ENCODE measurements at regions of chr6 and their contacts with region 1.

Region 1: DNA sequence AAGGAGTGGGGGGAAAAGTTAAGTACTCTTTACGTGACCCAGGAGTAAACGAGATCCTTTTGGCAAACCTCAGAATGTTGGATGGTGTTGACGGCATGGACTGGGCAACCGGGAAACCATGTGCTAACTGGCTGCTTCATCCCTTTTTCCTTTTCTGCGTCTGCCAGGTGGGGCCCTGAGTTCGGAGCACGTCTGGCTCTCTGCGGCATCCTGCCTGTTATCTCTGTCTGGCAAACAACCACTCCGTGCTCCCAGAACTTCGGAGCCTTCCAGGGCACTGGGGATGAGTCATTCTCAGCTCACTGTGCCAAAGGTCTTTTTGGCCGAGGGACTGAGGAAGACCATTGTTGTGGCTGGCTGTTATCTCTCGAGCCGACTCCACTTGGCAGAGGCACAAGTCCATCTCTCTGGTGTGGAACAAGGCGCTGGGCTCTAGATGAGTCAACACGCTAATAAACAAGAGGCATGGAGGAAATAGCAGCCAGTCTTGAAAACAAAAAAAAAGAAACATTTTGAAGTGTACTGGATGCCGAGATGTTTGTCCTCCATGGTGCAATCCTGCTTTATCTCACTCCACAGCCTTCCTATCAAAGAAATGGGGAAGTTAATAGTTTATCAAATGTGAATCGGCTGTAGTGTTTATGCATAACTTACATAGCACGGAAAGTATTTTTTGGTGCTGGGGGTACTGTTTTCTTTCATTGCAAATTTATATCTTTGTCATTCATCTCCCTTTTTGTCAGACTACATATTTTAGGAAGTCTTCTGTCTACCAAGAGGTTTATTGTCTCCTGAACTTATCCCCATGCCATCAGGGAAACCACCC is 64.6 kb upstream of the TXNDC5 start:
- DNase-seq: peak; percentile 75
- H3K4me3 ChIP-seq: peak overlapping the region in 1 of 3 experiments; percentile 14
- H3K27ac ChIP-seq: no peak overlapping the region
- H3K4me1 ChIP-seq: peaks cover 13% of the 10 kb centered on the region
- H3K27me3 ChIP-seq: no peaks in the 10 kb centered on the region
- CTCF ChIP-seq: no peak

Region 2: DNA sequence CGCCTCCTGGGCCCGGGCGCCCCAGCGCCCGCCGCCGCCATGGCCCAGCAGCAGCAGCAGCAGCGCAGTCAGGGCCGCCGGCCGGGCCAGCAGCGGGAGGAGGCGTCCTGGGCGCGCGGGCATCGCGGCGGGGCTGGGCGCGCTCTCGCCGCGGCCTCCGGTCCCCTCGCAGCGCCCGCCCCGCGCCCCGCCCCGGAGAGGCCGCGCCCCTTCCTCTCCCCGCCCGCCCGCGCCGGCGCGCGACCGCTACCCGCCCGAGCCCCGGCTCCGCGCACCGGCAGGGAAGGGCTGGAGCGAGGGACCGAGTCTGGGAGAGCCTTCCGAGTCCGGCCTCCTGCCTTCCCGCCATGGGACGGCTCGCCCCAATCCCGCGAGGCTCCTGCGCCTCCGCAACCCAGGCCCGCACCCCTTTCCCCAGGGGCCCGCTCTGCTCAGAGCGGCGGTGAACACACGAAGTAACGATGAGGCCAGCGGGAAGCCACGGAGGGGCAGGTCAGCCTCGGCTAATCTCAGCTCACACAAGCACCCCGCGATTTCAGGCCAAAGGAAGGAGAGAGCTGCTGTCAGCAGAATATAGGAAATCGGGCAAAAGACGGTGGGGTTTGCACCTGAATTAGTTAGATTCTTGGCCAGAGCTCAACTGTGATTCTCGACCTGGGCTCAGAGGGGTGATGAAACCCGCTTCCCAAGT is 64.4 kb before region 1 on chr6 and contains the start of gene TXNDC5:
- CTCF ChIA-PET with region 1: no interaction called
- dilution Hi-C with region 1: loop called (anchors 5 kb)
- in situ Hi-C with region 1: no loop called
- intact Hi-C with region 1: no loop called
- DNase-seq: peak; percentile 71
- H3K4me3 ChIP-seq: peak within 1 kb of the TSS; percentile 49 to 78 (median 74)
- H3K27ac ChIP-seq: peak within 1 kb of the TSS; percentile 42
- H3K4me1 ChIP-seq: peaks cover 17% of the 10 kb centered on the region
- H3K27me3 ChIP-seq: no peaks in the 10 kb centered on the region
- CTCF ChIP-seq: no peak
- total RNA-seq, gene TXNDC5: 109 to 170 TPM